ENCODE measurements at regions of chr5 and their contacts with region 1.

Region 1: DNA sequence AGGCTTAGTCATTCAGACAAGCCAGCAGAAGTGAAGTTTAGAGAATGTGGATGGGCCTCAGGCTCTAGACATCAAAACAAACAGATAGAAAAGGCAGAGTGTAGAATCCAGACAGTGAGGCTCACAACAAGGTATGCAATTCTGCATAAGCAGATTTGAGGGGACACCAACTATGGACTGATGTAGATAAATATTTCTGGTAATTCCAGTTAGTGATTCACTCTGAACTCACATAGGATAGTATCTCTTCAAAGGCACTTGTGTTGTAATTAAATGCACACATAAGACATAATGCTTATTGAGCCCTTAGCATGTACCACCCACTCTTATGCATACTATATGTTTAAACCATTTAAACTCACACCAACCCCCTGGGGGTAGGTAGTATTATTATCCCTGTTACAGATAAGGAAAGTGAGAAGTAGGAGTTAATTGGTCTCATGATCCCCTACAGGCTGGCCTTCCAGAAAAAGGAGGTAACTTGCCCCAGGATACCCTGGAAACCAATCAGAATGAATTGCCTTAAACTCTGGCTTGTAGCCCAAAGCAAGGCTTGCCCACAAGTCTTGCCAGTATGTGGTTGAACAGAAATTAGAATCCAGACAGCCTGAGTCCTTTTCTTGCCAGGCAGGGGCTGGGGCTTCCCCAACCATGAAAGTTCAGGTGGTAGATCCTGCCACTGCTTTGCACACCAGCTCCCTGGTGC is 39.5 kb upstream of the HSPB3 start:
- DNase-seq: no peak
- ATAC-seq: no peak
- H3K4me3 ChIP-seq: no peak overlapping the region
- H3K27ac ChIP-seq: no peak overlapping the region
- H3K4me1 ChIP-seq: no peaks in the 10 kb centered on the region
- H3K27me3 ChIP-seq: peaks cover 0 to 1% of the 10 kb centered on the region in 2 experiments; a peak in 1 of 5 replicates
- CTCF ChIP-seq: no peak
- EP300 ChIP-seq: no peak
- POLR2A ChIP-seq: no peak
- RAD21 ChIP-seq: no peak

Region 2: GRCh38 chr5:54243473-54244080 is 172.5 kb before region 1 on chr5:
- CTCF ChIA-PET with region 1: interaction called, 33 read pairs
- POLR2A ChIA-PET with region 1: no interaction called
- in situ Hi-C with region 1: no loop called
- intact Hi-C with region 1: loop called (anchors 1 kb)
- DNase-seq: peak; percentile 31
- ATAC-seq: peak; percentile 65
- H3K4me3 ChIP-seq: no peak overlapping the region
- H3K27ac ChIP-seq: no peak overlapping the region
- H3K4me1 ChIP-seq: no peaks in the 10 kb centered on the region
- H3K27me3 ChIP-seq: no peaks in the 10 kb centered on the region
- CTCF ChIP-seq: peak; percentile 65
- EP300 ChIP-seq: no peak
- POLR2A ChIP-seq: no peak
- RAD21 ChIP-seq: no peak

Region 3: GRCh38 chr5:54249210-54250028 is 166.6 kb before region 1 on chr5:
- CTCF ChIA-PET with region 1: interaction called, 33 read pairs
- POLR2A ChIA-PET with region 1: no interaction called
- in situ Hi-C with region 1: loop called (anchors 5 kb)
- intact Hi-C with region 1: no loop called
- DNase-seq: no peak
- ATAC-seq: no peak
- H3K4me3 ChIP-seq: no peak overlapping the region
- H3K27ac ChIP-seq: no peak overlapping the region
- H3K4me1 ChIP-seq: no peaks in the 10 kb centered on the region
- H3K27me3 ChIP-seq: no peaks in the 10 kb centered on the region
- CTCF ChIP-seq: no peak
- EP300 ChIP-seq: no peak
- POLR2A ChIP-seq: no peak
- RAD21 ChIP-seq: no peak

Region 4: GRCh38 chr5:54310433-54311175 is 105.4 kb before region 1 on chr5 and contains the start of gene ARL15:
- CTCF ChIA-PET with region 1: no interaction called
- POLR2A ChIA-PET with region 1: no interaction called
- in situ Hi-C with region 1: no loop called
- intact Hi-C with region 1: loop called (anchors 10 kb)
- DNase-seq: peak; percentile 91
- ATAC-seq: peak; percentile 93
- H3K4me3 ChIP-seq: peak within 1 kb of the TSS; percentile 91 to 97 (median 92)
- H3K27ac ChIP-seq: peak within 1 kb of the TSS; percentile 43
- H3K4me1 ChIP-seq: peaks cover 42% of the 10 kb centered on the region
- H3K27me3 ChIP-seq: no peaks in the 10 kb centered on the region; a peak in 2 of 5 replicates
- CTCF ChIP-seq: 0 out of 2 replicates have a peak, but pooled peaks have one; percentile 9
- EP300 ChIP-seq: no peak; a peak in 1 of 4 replicates
- POLR2A ChIP-seq: peak; percentile 97 to 98
- RAD21 ChIP-seq: no peak
- total RNA-seq, gene ARL15: 7.7 and 11.5 TPM in 2 replicates

Region 5: GRCh38 chr5:54337523-54337922 is 78.5 kb before region 1 on chr5:
- CTCF ChIA-PET with region 1: no interaction called
- POLR2A ChIA-PET with region 1: no interaction called
- in situ Hi-C with region 1: no loop called
- intact Hi-C with region 1: loop called (anchors 2 kb)
- DNase-seq: no peak
- ATAC-seq: no peak
- H3K4me3 ChIP-seq: no peak overlapping the region
- H3K27ac ChIP-seq: no peak overlapping the region
- H3K4me1 ChIP-seq: no peaks in the 10 kb centered on the region
- H3K27me3 ChIP-seq: no peaks in the 10 kb centered on the region
- CTCF ChIP-seq: no peak
- EP300 ChIP-seq: no peak
- POLR2A ChIP-seq: no peak
- RAD21 ChIP-seq: no peak

Measured in HepG2 (cell line).